Psoas muscle (tissue), 8 donors: ENCODE measurements at regions of chr7 and their contacts with region 1.

Region 1: DNA sequence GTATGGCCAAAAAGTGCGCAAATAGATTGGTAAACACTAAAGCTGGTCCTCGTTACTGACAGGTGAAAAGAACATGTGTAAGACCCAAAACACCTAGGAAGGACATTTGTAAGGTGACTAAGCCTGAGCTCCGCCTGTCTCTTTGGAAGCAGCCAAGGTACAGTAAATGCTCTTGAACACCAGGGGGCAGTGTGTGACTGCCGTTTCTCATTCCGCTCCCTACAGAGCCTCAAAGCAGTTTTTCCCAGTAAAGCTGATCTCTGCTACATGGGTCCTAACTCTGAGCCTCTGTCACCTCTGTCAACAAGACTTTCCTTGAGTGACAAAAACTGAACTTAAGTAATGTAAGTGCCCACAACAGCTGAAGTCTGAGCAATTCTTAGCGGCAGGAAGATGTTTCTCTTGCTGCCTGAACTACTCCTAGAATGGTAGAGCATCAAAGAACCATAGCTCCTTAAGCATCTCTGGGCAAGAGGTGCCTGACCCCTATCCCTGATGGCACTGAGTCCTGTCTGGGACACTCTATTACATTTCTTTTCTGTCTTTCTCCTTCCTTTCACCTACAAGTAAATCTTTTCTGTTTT is 238.0 kb upstream of the INHBA start:
- DNase-seq: peak; percentile 61 to 68
- ATAC-seq: peak; percentile 84 to 90 (median 87)
- H3K4me3 ChIP-seq: no peak overlapping the region
- H3K27ac ChIP-seq: no peak overlapping the region
- H3K4me1 ChIP-seq: no peaks in the 10 kb centered on the region
- H3K27me3 ChIP-seq: no peaks in the 10 kb centered on the region
- CTCF ChIP-seq: peak; percentile 90

Region 2: GRCh38 chr7:41977151-41977651 is 36.3 kb after region 1 on chr7:
- intact Hi-C with region 1: loop called (anchors 2 to 5 kb)
- DNase-seq: peak in 1 of 2 donors; percentile 63
- ATAC-seq: peak; percentile 92 to 97 (median 96)
- H3K4me3 ChIP-seq: no peak overlapping the region
- H3K27ac ChIP-seq: peak overlapping the region; percentile 70
- H3K4me1 ChIP-seq: peaks cover 40% of the 10 kb centered on the region
- H3K27me3 ChIP-seq: no peaks in the 10 kb centered on the region
- CTCF ChIP-seq: peak; percentile 78

Region 3: DNA sequence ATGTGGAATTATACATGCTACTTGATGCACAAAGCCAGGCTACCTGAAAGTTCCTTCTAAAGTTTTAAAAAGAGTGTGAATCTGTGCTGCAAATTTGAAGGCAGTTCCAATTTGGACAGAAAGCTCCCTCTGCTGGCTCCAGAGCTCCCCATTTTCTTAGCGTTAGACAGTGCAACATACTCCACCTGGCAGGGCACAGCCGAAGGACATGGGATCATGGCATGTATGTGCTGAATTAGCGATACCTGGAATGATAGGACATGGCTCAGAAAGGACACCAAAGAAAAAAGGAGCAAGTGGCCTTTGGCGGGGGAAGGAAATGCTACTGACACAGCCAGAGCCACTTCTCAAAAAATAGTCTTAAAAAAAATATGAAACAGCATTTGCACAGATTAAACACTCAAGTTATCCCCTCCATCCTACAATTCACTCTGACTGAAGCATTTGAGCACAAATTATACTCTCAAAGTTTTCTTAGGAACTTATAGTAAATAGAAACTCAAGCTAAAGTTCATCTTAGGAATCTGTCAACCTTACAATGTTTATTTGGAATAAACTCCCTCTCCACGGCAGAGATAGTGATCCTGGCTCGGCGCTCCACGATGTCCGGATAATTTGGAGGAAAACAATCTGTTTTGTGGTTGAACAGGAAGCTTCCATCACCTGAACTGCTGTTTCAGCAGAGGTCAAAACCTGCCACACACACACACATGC is 891.0 kb after region 1 on chr7:
- intact Hi-C with region 1: loop called in 1 of 2 experiments (anchors 5 kb)
- DNase-seq: peak in 1 of 2 donors; percentile 16
- ATAC-seq: peak in 3 of 4 donors; percentile 40 to 69 (median 55)
- H3K4me3 ChIP-seq: no peak overlapping the region
- H3K27ac ChIP-seq: no peak overlapping the region
- H3K4me1 ChIP-seq: peaks cover 3% of the 10 kb centered on the region
- H3K27me3 ChIP-seq: no peaks in the 10 kb centered on the region
- CTCF ChIP-seq: peak; percentile 50

Region 4: DNA sequence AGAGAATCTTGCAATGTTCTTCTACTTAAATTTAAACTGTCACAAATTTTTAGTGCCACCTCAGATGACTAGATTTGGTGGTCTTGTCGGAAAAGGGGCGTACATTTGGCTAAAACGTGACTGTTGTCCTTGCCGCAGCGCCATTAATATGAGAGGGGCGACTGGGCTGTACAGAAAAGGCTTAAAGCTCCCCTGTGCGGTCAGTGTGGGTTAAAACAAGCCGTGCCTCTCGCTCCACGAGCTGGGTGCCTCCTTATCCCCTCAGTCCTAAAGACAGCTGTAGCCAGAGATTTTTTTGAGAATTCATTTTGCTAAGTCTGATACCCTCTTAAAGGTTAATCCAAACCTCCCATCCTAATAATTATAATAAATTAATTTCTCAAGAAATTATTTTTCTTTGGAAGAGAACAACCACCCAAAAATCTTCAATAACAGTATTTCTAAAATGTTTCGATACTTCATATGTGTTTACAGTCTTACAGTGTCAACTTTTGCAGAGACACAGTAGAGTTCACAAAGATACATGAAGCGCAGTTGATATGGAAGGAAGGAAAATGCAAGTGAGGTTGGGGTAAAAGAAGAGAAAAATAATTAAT is 902.5 kb after region 1 on chr7:
- intact Hi-C with region 1: loop called in 1 of 2 experiments (anchors 2 kb)
- DNase-seq: peak in 1 of 2 donors; percentile 52
- ATAC-seq: peak; percentile 65 to 93 (median 83)
- H3K4me3 ChIP-seq: peak overlapping the region; percentile 51
- H3K27ac ChIP-seq: no peak overlapping the region
- H3K4me1 ChIP-seq: no peaks in the 10 kb centered on the region
- H3K27me3 ChIP-seq: peaks cover 0 to 4% (median 0%) of the 10 kb centered on the region in 3 donors
- CTCF ChIP-seq: peak; percentile 51

Region 5: GRCh38 chr7:42876182-42877068 is 935.6 kb after region 1 on chr7:
- intact Hi-C with region 1: loop called in 1 of 2 experiments (anchors 5 kb)
- DNase-seq: no peak
- ATAC-seq: peak in 2 of 4 donors; percentile 55 to 66
- H3K4me3 ChIP-seq: no peak overlapping the region
- H3K27ac ChIP-seq: no peak overlapping the region
- H3K4me1 ChIP-seq: no peaks in the 10 kb centered on the region
- H3K27me3 ChIP-seq: no peaks in the 10 kb centered on the region
- CTCF ChIP-seq: peak; percentile 69

Region 6: GRCh38 chr7:43260980-43261878 is 1320.4 kb after region 1 on chr7:
- intact Hi-C with region 1: loop called in 1 of 2 experiments (anchors 5 kb)
- DNase-seq: peak; percentile 54 to 72
- ATAC-seq: peak; percentile 69 to 85 (median 78)
- H3K4me3 ChIP-seq: no peak overlapping the region
- H3K27ac ChIP-seq: no peak overlapping the region
- H3K4me1 ChIP-seq: no peaks in the 10 kb centered on the region
- H3K27me3 ChIP-seq: no peaks in the 10 kb centered on the region
- CTCF ChIP-seq: peak; percentile 84